CD14-positive monocyte (primary cell): ENCODE measurements at regions of chr3 and their contacts with region 1.

Region 1: DNA sequence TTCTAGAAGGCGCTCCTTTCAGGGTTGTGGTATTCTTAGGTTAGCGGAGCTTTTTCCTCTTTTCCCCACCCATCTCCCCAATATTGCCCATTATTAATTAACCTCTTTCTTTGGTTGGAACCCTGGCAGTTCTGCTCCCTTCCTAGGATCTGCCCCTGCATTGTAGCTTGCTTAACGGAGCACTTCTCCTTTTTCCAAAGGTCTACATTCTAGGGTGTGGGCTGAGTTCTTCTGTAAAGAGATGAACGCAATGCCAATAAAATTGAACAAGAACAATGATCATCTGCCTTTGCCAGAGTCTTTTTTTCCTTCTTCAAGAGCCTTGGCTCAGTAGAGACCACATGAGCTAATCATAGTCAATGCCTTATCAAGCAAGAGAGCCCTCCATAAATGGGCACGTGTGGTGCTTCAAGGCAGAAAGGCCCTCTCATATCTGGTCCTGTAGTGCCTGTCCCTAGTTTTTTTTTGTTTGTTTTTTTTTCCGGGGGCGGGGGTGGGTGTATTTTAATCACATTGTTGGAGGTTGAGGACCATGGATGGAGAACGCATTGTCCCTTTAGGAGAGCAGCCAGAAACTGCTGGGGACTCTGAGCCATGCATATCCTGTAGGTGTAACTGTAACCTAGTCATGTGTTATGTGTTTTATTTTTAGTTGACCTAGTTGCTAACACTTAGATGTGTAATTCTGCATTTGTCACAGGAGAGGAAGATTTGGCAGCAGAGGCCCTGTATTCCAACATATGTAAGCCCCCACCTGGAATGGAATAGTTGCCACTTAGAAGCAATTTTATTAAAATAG is 64.7 kb upstream of the ACAD9 start:
- DNase-seq: peak in 2 of 3 donors; percentile 17 to 44
- H3K4me3 ChIP-seq: no peak overlapping the region
- H3K4me3 Mint-ChIP-seq: peak overlapping the region; percentile 37 to 42
- H3K27ac ChIP-seq: peak overlapping the region in 1 of 2 donors; percentile 38
- H3K27ac Mint-ChIP-seq: peak overlapping the region; percentile 66 to 78 (median 74)
- H3K4me1 ChIP-seq: peaks cover 25 to 39% of the 10 kb centered on the region in 2 donors
- H3K4me1 Mint-ChIP-seq: peaks cover 40% of the 10 kb centered on the region
- H3K27me3 ChIP-seq: no peaks in the 10 kb centered on the region
- H3K27me3 Mint-ChIP-seq: peaks cover 0 to 2% (median 0%) of the 10 kb centered on the region in 3 donors
- CTCF ChIP-seq: no peak

Region 2: DNA sequence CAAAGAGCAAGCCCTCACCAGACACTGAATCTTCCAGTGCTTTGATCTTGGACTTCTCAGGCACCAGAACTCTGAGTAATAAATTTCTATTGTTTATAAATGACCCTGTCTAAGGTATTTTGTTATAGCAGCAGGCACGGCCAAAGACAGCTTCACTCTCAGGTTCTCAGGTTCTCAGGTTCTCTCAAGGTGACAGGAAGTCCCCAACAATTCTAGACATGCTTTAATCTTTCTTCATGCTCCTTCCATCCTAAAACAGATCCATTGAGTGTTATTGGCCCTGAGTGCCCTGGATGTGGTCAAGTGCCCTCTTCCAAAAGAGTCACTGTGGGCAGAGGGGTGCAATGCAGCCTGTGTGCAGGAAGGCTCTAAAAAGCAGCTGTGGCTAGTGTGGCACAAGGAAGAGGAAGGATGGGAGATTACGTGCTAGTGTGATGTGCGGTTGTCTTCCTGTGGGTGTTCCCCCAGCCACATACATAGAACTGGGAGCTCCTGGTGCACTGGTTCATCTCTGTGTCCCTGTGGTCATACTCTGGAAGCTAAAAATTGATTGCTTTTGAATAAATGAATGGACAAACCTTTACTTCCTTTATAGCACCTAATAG is 99.7 kb before region 1 on chr3:
- intact Hi-C with region 1: no loop called
- DNase-seq: peak; percentile 72 to 90 (median 82)
- H3K4me3 ChIP-seq: peak overlapping the region in 1 of 3 experiments; percentile 9
- H3K4me3 Mint-ChIP-seq: peak overlapping the region in 1 of 2 donors; percentile 62
- H3K27ac ChIP-seq: peak overlapping the region; percentile 20 to 47
- H3K27ac Mint-ChIP-seq: peak overlapping the region; percentile 75 to 90 (median 85)
- H3K4me1 ChIP-seq: peaks cover 26 to 32% of the 10 kb centered on the region in 2 donors
- H3K4me1 Mint-ChIP-seq: peaks cover 27% of the 10 kb centered on the region
- H3K27me3 ChIP-seq: no peaks in the 10 kb centered on the region
- H3K27me3 Mint-ChIP-seq: peaks cover 1 to 3% (median 2%) of the 10 kb centered on the region in 3 donors
- CTCF ChIP-seq: no peak

Region 3: DNA sequence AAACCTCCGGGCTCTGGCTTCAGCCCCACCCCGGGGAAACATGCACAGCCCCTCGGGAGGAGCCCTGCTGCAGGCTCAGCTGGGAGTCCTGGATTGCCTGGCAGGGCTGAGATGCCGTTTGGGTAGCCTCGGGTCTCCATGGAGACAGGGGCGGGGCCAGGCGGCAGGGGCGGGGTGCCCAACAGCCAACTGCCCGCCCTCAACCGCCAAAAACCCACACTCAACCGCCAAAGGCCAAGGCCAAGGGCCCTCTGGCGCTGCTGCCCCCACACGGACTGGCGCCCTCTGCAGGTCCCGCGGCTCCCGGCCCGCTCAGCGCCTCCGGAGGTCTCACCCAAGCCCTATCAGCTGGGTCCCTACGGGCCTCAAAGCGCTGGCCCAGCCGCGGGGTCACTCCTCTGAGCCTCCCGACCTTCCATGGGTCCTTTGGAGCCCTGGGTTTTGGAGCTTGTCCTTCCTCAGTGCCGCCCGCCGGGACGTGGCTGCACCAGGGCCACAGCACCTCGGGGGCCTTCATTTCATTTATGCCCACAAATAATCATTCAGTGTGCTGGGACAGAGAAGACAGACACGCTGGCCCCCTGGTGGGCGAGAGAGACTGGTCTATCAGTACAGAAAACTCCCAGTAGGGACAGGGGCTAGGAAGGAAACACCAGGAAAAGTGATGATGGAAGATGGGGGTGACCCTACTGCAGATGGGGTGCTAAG is 31.2 kb after region 1 on chr3:
- intact Hi-C with region 1: loop called in 1 of 2 experiments (anchors 5 kb)
- DNase-seq: peak; percentile 51 to 66 (median 62)
- H3K4me3 ChIP-seq: peak overlapping the region; percentile 28 to 78 (median 39)
- H3K4me3 Mint-ChIP-seq: peak overlapping the region; percentile 75 to 92
- H3K27ac ChIP-seq: peak overlapping the region; percentile 20 to 74
- H3K27ac Mint-ChIP-seq: peak overlapping the region; percentile 54 to 90 (median 84)
- H3K4me1 ChIP-seq: peaks cover 55 to 63% of the 10 kb centered on the region in 2 donors
- H3K4me1 Mint-ChIP-seq: peaks cover 58% of the 10 kb centered on the region
- H3K27me3 ChIP-seq: no peaks in the 10 kb centered on the region
- H3K27me3 Mint-ChIP-seq: peaks cover 0 to 3% (median 0%) of the 10 kb centered on the region in 3 donors
- CTCF ChIP-seq: peak; percentile 76